SK-N-SH (cell line): ENCODE measurements at regions of chr1 and their contacts with region 1.

Region 1: GRCh38 chr1:155989242-155990004 is 11.1 kb upstream of the ARHGEF2 start:
- DNase-seq: peak; percentile 85
- H3K4me3 ChIP-seq: no peak overlapping the region; a peak in 1 of 4 replicates
- H3K27ac ChIP-seq: no peak overlapping the region
- H3K4me1 ChIP-seq: no peaks in the 10 kb centered on the region; a peak in 1 of 4 replicates
- H3K27me3 ChIP-seq: no peaks in the 10 kb centered on the region
- CTCF ChIP-seq: peak; percentile 91
- EP300 ChIP-seq: no peak
- RAD21 ChIP-seq: peak; percentile 96

Region 2: DNA sequence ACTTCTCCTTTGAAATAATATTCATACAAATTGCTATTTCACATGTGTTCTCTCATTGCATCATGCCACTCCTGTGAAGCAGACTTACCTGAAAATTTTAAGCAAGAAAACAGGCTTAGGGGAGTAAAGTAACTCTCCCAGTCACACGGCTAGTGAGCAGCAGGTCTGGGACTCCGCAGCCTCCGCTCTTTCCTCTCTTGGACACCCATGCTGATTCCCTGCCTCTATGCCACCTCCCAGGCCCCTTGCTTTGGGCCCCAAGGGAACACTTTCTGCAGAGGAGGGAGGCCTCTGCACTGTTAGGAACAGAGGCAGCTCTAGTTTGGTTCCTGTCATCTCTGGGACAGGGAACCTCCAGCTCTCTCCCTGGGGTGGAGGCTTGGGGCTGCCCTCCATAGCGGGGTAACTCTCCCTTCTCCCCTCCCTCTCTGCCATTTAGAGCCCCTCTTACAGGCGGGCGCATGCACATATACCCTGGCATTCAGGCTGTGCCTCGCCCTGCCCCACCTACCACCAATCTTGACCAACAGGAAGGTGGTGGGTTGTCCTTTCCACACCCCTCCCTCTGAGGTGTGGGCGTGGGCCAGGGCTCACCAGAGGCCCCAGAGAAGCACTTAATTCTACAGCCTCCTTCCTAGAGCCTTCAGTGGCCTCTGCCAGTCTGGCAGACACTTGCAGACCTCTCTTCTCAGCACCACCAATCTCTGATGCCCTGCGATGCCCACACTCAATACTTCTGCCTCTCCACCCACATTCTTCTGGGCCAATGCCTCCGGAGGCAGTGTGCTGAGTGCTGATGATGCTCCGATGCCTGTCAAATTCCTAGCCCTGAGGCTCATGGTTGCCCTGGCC is 48.2 kb before region 1 on chr1 and contains the start of gene RXFP4:
- CTCF ChIA-PET with region 1: interaction called, 83 read pairs
- POLR2A ChIA-PET with region 1: no interaction called
- DNase-seq: no peak
- H3K4me3 ChIP-seq: no peak within 1 kb of the TSS
- H3K27ac ChIP-seq: peak within 1 kb of the TSS; percentile 71 to 84
- H3K4me1 ChIP-seq: peaks cover 17 to 23% of the 10 kb centered on the region in 2 experiments
- H3K27me3 ChIP-seq: no peaks in the 10 kb centered on the region
- CTCF ChIP-seq: no peak
- EP300 ChIP-seq: no peak
- RAD21 ChIP-seq: no peak
- polyA plus RNA-seq, gene RXFP4: not detected in 2 replicates

Region 3: GRCh38 chr1:155967341-155968050 is 21.9 kb before region 1 on chr1:
- CTCF ChIA-PET with region 1: interaction called, 15 read pairs
- POLR2A ChIA-PET with region 1: no interaction called
- DNase-seq: peak; percentile 17
- H3K4me3 ChIP-seq: no peak overlapping the region
- H3K27ac ChIP-seq: no peak overlapping the region
- H3K4me1 ChIP-seq: peaks cover 7 to 46% of the 10 kb centered on the region in 2 experiments; a peak in 3 of 4 replicates
- H3K27me3 ChIP-seq: no peaks in the 10 kb centered on the region
- CTCF ChIP-seq: no peak
- EP300 ChIP-seq: no peak
- RAD21 ChIP-seq: no peak

Region 4: GRCh38 chr1:156001682-156002171 is 12.3 kb after region 1 on chr1:
- CTCF ChIA-PET with region 1: interaction called, 61 read pairs
- POLR2A ChIA-PET with region 1: no interaction called
- DNase-seq: no peak
- H3K4me3 ChIP-seq: no peak overlapping the region
- H3K27ac ChIP-seq: no peak overlapping the region
- H3K4me1 ChIP-seq: peaks cover 0 to 8% of the 10 kb centered on the region in 2 experiments; a peak in 1 of 4 replicates
- H3K27me3 ChIP-seq: no peaks in the 10 kb centered on the region
- CTCF ChIP-seq: 0 out of 2 replicates have a peak, but pooled peaks have one; percentile 11
- EP300 ChIP-seq: no peak
- RAD21 ChIP-seq: peak; percentile 24

Region 5: GRCh38 chr1:156067262-156067661 is 77.8 kb after region 1 on chr1:
- CTCF ChIA-PET with region 1: interaction called, 11 read pairs
- POLR2A ChIA-PET with region 1: no interaction called
- DNase-seq: no peak
- H3K4me3 ChIP-seq: no peak overlapping the region
- H3K27ac ChIP-seq: no peak overlapping the region
- H3K4me1 ChIP-seq: peaks cover 0 to 17% of the 10 kb centered on the region in 2 experiments; a peak in 1 of 4 replicates
- H3K27me3 ChIP-seq: no peaks in the 10 kb centered on the region
- CTCF ChIP-seq: no peak
- EP300 ChIP-seq: no peak
- RAD21 ChIP-seq: no peak